AG04449 (cell line): ENCODE measurements at regions of chr1 and their contacts with region 1.

Region 1: GRCh38 chr1:25247024-25247828 is at the start of gene RSRP1:
- DNase-seq: peak; percentile 85
- H3K4me3 ChIP-seq: peak within 1 kb of the TSS; percentile 74
- CTCF ChIP-seq: no peak

Region 2: GRCh38 chr1:25232027-25232865 is 15.0 kb before region 1 on chr1 and contains the start of gene SYF2:
- CTCF ChIA-PET with region 1: interaction called, 3 read pairs
- POLR2A ChIA-PET with region 1: interaction called, 40 read pairs
- DNase-seq: peak; percentile 62
- H3K4me3 ChIP-seq: peak within 1 kb of the TSS; percentile 99
- CTCF ChIP-seq: no peak